Panc1 (cell line): ENCODE measurements at regions of chr7 and their contacts with region 1.

Region 1: GRCh38 chr7:35906191-35906908 is 105.5 kb downstream of the SEPTIN7 start:
- DNase-seq: peak; percentile 75
- ATAC-seq: peak; percentile 96
- H3K4me3 ChIP-seq: no peak overlapping the region
- H3K27ac ChIP-seq: no peak overlapping the region
- H3K4me1 ChIP-seq: no peaks in the 10 kb centered on the region
- H3K27me3 ChIP-seq: no peaks in the 10 kb centered on the region
- CTCF ChIP-seq: peak; percentile 96

Region 2: DNA sequence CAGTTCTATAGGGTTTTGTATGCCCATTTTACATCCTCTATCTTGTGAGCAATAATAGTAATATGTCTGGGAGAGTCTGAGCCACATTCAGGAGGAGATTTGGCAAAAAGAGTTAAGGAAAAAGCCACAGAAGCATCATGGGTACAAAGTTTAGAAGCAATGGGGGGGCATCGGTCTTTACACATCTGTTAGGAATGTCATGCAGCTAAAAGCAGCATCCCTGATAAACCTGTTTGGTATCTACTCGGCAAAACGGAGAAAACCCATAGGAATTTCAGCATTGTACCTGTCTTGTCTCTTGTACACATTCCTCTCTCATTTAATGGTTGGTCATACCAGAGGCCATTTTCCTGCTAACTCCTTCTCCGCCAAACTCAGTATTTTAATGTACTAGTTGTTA is 198.9 kb before region 1 on chr7:
- CTCF ChIA-PET with region 1: interaction called, 18 read pairs
- POLR2A ChIA-PET with region 1: no interaction called
- in situ Hi-C with region 1: no loop called
- intact Hi-C with region 1: loop called (anchors 2 kb)
- DNase-seq: no peak
- ATAC-seq: no peak
- H3K4me3 ChIP-seq: no peak overlapping the region
- H3K27ac ChIP-seq: no peak overlapping the region
- H3K4me1 ChIP-seq: 0 out of 2 replicates have a peak, but pooled peaks cover 3% of the 10 kb centered on the region
- H3K27me3 ChIP-seq: peaks cover 4% of the 10 kb centered on the region; the same call in 1 of the 2 replicates
- CTCF ChIP-seq: no peak

Region 3: GRCh38 chr7:35781200-35781701 is 125.1 kb before region 1 on chr7:
- CTCF ChIA-PET with region 1: no interaction called
- POLR2A ChIA-PET with region 1: no interaction called
- in situ Hi-C with region 1: no loop called
- intact Hi-C with region 1: no loop called
- DNase-seq: no peak
- ATAC-seq: no peak
- H3K4me3 ChIP-seq: no peak overlapping the region
- H3K27ac ChIP-seq: no peak overlapping the region
- H3K4me1 ChIP-seq: no peaks in the 10 kb centered on the region
- H3K27me3 ChIP-seq: peaks cover 31% of the 10 kb centered on the region
- CTCF ChIP-seq: no peak

Region 4: DNA sequence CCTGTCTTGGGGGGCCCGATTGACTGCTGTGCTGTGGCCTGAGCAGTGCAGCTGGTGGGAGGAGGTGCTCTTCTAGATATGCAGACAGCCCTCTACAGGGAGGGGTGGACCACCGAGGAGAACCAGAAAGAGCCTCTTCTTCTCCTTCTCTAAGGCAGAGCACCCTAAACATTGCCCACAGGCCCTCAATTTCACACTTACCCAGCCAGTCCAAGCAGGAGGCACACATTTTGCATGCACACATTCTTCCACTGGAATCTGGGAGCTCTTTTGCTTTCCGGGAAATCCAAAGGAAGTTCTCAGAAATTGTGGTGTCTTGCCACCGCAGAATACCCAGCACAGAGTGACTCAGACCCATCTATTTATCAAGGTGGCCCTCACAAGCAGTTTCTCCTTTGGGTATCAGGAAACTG is 292.5 kb after region 1 on chr7:
- CTCF ChIA-PET with region 1: no interaction called
- POLR2A ChIA-PET with region 1: no interaction called
- in situ Hi-C with region 1: no loop called
- intact Hi-C with region 1: no loop called
- DNase-seq: no peak
- ATAC-seq: no peak
- H3K4me3 ChIP-seq: no peak overlapping the region
- H3K27ac ChIP-seq: no peak overlapping the region
- H3K4me1 ChIP-seq: peaks cover 46% of the 10 kb centered on the region
- H3K27me3 ChIP-seq: no peaks in the 10 kb centered on the region
- CTCF ChIP-seq: no peak